SK-N-SH (cell line): ENCODE measurements at regions of chr15 and their contacts with region 1.

Region 1: DNA sequence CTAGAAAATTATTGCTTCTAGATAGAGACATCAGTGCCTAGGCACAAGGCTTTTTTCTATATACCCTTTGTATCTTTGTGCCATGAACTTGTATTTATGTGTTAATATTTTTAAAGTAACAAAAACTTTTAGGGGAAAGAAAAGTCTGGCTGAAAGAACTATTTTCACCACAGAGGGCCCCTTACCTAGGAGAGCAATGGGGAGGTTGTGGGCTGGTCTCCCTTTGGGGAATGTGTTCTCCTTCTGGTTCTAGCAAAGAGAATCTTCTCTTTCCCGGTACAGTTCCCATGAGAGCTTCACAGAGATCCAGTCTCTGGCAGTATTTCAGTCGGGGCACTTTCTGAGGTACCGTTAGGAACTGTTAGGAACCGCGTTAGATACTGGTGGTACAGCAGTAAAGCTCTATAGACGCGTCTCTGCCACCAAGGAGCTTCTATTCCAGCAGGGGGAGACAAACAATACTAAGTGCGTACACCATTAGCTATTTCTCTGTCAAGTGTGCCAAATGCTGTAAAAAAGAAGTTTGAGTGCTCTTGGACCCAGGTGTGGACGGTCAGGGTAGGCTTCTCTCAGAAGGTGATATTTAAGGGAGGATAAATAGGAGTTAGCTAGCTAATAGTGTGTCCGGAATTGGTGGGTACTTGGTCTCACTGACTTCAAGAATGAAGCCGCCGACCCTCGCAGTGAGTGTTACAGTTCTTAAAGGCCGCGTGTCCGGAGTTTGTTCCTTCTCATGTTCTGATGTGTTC is 4.6 kb upstream of the EPB42 start:
- DNase-seq: peak; percentile 71
- H3K4me3 ChIP-seq: no peak overlapping the region; a peak in 1 of 4 replicates
- H3K27ac ChIP-seq: no peak overlapping the region
- H3K4me1 ChIP-seq: peaks cover 0 to 7% of the 10 kb centered on the region in 2 experiments; a peak in 1 of 4 replicates
- H3K27me3 ChIP-seq: peaks cover 18% of the 10 kb centered on the region; the same call in 1 of the 2 replicates
- CTCF ChIP-seq: peak; percentile 71
- EP300 ChIP-seq: no peak
- RAD21 ChIP-seq: peak; percentile 72

Region 2: GRCh38 chr15:43185157-43186017 is 40.0 kb before region 1 on chr15 and contains the start of gene CCNDBP1:
- CTCF ChIA-PET with region 1: interaction called, 12 read pairs
- POLR2A ChIA-PET with region 1: no interaction called
- DNase-seq: peak; percentile 97
- H3K4me3 ChIP-seq: peak within 1 kb of the TSS; percentile 75 to 88
- H3K27ac ChIP-seq: peak within 1 kb of the TSS; percentile 47 to 89
- H3K4me1 ChIP-seq: peaks cover 0 to 10% of the 10 kb centered on the region in 2 experiments; a peak in 3 of 4 replicates
- H3K27me3 ChIP-seq: no peaks in the 10 kb centered on the region
- CTCF ChIP-seq: peak; percentile 59
- EP300 ChIP-seq: no peak
- RAD21 ChIP-seq: no peak
- polyA plus RNA-seq, gene CCNDBP1: 63.6 and 81.7 TPM in 2 replicates

Region 3: DNA sequence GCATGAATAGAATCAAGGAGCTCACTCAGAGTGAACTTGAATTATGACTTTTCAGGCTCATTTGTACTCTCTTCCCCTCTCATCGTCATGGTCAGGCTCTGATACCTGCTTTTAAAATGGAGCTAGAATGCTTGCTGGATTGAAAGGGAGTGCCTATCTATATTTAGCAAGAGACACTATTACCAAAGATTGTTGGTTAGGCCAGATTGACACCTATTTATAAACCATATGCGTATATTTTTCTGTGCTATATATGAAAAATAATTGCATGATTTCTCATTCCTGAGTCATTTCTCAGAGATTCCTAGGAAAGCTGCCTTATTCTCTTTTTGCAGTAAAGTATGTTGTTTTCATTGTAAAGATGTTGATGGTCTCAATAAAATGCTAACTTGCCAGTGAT is 30.6 kb before region 1 on chr15:
- CTCF ChIA-PET with region 1: interaction called, 12 read pairs
- POLR2A ChIA-PET with region 1: no interaction called
- DNase-seq: no peak
- H3K4me3 ChIP-seq: no peak overlapping the region
- H3K27ac ChIP-seq: no peak overlapping the region
- H3K4me1 ChIP-seq: no peaks in the 10 kb centered on the region; a peak in 1 of 4 replicates
- H3K27me3 ChIP-seq: no peaks in the 10 kb centered on the region
- CTCF ChIP-seq: no peak
- EP300 ChIP-seq: no peak
- RAD21 ChIP-seq: no peak

Region 4: DNA sequence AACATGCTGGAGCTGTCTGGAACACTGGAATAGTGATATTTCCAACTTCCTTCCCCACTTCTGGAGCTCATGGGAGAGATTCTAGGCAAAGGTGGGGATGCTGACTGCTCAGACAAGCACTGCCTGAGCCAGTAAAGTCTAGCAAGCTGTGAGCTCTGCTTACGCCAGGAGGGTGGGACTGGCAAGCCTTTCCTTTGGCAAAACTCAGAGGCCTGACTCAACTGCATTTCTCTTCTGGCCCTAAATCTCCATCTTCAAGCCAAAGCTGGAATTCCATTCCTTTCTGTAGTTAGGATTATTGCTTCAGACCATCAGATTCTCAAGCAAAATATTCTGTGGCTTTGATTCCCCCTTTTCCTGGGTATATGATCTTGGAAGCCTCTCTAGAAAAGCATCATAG is 15.7 kb after region 1 on chr15:
- CTCF ChIA-PET with region 1: interaction called, 16 read pairs
- POLR2A ChIA-PET with region 1: no interaction called
- DNase-seq: no peak
- H3K4me3 ChIP-seq: no peak overlapping the region
- H3K27ac ChIP-seq: no peak overlapping the region
- H3K4me1 ChIP-seq: peaks cover 0 to 10% of the 10 kb centered on the region in 2 experiments; a peak in 1 of 4 replicates
- H3K27me3 ChIP-seq: peaks cover 5% of the 10 kb centered on the region; the same call in 1 of the 2 replicates
- CTCF ChIP-seq: no peak
- EP300 ChIP-seq: no peak
- RAD21 ChIP-seq: no peak

Region 5: GRCh38 chr15:43268111-43269105 is 43.0 kb after region 1 on chr15:
- CTCF ChIA-PET with region 1: interaction called, 31 read pairs
- POLR2A ChIA-PET with region 1: no interaction called
- DNase-seq: peak; percentile 59
- H3K4me3 ChIP-seq: no peak overlapping the region
- H3K27ac ChIP-seq: no peak overlapping the region
- H3K4me1 ChIP-seq: no peaks in the 10 kb centered on the region
- H3K27me3 ChIP-seq: peaks cover 25% of the 10 kb centered on the region; the same call in 1 of the 2 replicates
- CTCF ChIP-seq: 0 out of 2 replicates have a peak, but pooled peaks have one; percentile 19
- EP300 ChIP-seq: no peak
- RAD21 ChIP-seq: peak; percentile 70

Region 6: DNA sequence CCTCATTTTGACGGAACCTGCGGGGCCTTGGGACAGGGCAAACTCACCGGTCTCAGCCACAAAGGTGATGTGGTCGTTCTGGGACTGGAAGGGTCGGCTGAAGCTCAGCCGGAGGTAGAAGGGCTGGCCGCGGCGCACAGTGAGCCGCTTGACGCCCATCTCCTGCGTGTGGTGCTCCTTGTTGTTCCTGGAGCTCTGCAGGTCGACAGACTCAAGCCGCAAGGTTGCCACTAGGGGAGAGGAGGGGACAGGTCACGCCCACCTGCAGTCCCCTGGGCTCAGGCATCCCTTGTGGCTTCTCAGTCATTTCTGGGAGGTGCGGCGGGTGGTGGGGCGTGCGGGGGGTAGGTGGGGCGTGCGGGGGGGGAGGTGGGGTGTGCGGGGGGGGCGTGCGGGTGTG is 68.0 kb after region 1 on chr15:
- CTCF ChIA-PET with region 1: interaction called, 167 read pairs
- POLR2A ChIA-PET with region 1: no interaction called
- DNase-seq: peak; percentile 47
- H3K4me3 ChIP-seq: no peak overlapping the region
- H3K27ac ChIP-seq: no peak overlapping the region
- H3K4me1 ChIP-seq: no peaks in the 10 kb centered on the region
- H3K27me3 ChIP-seq: peaks cover 4% of the 10 kb centered on the region; the same call in 1 of the 2 replicates
- CTCF ChIP-seq: no peak
- EP300 ChIP-seq: no peak
- RAD21 ChIP-seq: no peak